Heart right ventricle (tissue), 16 donors: ENCODE measurements at regions of chr6 and their contacts with region 1.

Region 1: GRCh38 chr6:43454696-43455530 is 435 bp downstream of the DLK2 start:
- DNase-seq: peak; percentile 85 to 87
- ATAC-seq: peak; percentile 86 to 92 (median 90)
- H3K4me3 ChIP-seq: peak overlapping the region; percentile 28 to 60 (median 56)
- H3K27ac ChIP-seq: peak overlapping the region in 2 of 10 donors; percentile 13 to 62
- H3K4me1 ChIP-seq: peaks cover 0 to 22% (median 12%) of the 10 kb centered on the region in 9 donors
- H3K27me3 ChIP-seq: peaks cover 0 to 53% (median 12%) of the 10 kb centered on the region in 7 donors
- CTCF ChIP-seq: peak in 3 of 9 donors; percentile 2 to 32 (median 3)

Region 2: GRCh38 chr6:43496370-43497128 is 41.6 kb after region 1 on chr6:
- intact Hi-C with region 1: loop called in 5 of 10 experiments (anchors 2 to 5 kb)
- DNase-seq: no peak
- ATAC-seq: peak; percentile 13 to 57 (median 37)
- H3K4me3 ChIP-seq: no peak overlapping the region
- H3K27ac ChIP-seq: peak overlapping the region in 4 of 10 donors; percentile 5 to 74 (median 30)
- H3K4me1 ChIP-seq: peaks cover 0 to 85% (median 43%) of the 10 kb centered on the region in 9 donors
- H3K27me3 ChIP-seq: no peaks in the 10 kb centered on the region
- CTCF ChIP-seq: peak in 8 of 9 donors; percentile 35 to 75 (median 66)

Region 3: DNA sequence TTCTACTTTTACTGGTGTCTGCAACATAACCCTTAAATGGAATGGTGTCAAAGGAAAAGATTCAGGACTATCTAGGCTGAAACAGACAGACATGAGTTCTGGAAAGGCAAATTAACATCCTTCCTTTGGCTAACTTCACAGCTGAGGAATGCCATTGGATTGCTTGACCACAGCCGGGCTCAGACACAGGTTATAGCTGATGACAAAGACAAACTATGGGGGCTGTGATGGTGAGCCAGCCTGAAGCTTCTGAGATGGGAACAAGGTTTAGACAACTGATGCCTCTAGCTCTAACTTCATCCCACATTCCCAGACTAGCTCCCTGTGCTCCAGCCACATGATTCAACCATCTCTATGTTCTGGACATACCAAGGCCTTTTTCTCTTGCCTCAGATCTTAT is 77.3 kb after region 1 on chr6:
- intact Hi-C with region 1: no loop called
- DNase-seq: no peak
- ATAC-seq: no peak
- H3K4me3 ChIP-seq: no peak overlapping the region
- H3K27ac ChIP-seq: no peak overlapping the region
- H3K4me1 ChIP-seq: no peaks in the 10 kb centered on the region
- H3K27me3 ChIP-seq: no peaks in the 10 kb centered on the region
- CTCF ChIP-seq: no peak